Gastrocnemius medialis (tissue), 4 donors: ENCODE measurements at regions of chr12 and their contacts with region 1.

Region 1: GRCh38 chr12:93419388-93420034 is 22.2 kb downstream of the UBE2N start:
- DNase-seq: no peak
- ATAC-seq: peak; percentile 61 to 71
- H3K4me3 ChIP-seq: peak overlapping the region in 1 of 4 donors; percentile 13
- H3K27ac ChIP-seq: peak overlapping the region; percentile 58 to 71 (median 62)
- H3K4me1 ChIP-seq: peaks cover 59 to 66% of the 10 kb centered on the region in 2 donors
- H3K27me3 ChIP-seq: no peaks in the 10 kb centered on the region
- CTCF ChIP-seq: peak; percentile 64 to 75 (median 66)
- POLR2A ChIP-seq: no peak

Region 2: GRCh38 chr12:92784795-92785562 is 634.5 kb before region 1 on chr12:
- in situ Hi-C with region 1: loop called in 1 of 4 experiments (anchors 10 kb)
- intact Hi-C with region 1: loop called (anchors 5 kb)
- DNase-seq: peak in 1 of 2 donors; percentile 8
- ATAC-seq: peak; percentile 95 to 98
- H3K4me3 ChIP-seq: no peak overlapping the region
- H3K27ac ChIP-seq: peak overlapping the region; percentile 25 to 51 (median 32)
- H3K4me1 ChIP-seq: peaks cover 20 to 29% of the 10 kb centered on the region in 2 donors
- H3K27me3 ChIP-seq: no peaks in the 10 kb centered on the region
- CTCF ChIP-seq: peak; percentile 43 to 69 (median 67)
- POLR2A ChIP-seq: no peak

Region 3: DNA sequence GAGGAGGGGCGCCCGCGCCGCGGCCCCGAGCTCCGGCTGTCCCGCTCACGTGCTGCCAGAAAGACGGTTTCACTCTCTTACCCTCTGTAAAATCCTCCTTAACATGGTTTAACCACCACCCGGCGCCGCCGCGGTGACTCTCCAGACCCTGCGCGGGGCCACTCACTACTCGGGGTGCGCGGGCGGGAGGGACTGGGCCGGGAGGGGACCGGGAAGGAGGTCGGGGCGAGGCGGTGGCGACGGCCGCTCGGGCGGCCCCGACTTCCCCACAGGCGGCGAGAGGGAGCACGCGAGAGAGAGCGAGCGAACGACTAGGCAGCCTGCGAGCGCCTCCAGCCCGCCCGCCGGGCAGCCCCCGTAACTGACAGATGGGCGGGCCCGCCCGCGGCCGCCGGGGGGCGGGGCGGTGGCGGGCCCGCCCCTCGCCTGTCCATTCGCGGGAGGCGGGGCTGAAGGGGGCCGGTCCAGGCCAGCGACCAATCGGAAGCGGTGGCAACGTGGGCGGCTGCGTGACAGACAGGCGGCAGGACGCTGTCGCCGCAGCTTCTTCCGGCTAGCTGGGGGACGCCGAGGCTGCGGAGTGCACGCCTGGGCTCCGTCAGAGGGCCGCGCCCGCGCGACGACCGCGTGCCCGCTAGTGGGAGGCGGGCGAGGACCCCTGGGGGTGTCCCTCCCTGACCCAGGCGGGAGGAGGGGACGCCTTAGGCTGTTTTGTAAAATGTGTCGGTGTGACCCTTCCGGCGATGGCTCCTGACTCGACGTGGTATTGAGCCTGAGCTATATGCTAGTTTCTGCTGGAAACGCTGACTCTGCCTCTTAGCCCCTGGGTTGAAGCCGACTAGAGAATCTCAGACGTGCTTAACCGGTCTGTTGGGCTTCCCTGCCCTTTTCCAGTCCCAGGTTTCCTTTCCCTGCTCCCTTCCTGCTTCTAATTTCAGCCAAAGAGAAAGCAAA is 490.3 kb before region 1 on chr12 and contains the start of gene EEA1:
- in situ Hi-C with region 1: no loop called
- intact Hi-C with region 1: loop called (anchors 5 kb)
- DNase-seq: peak; percentile 96 to 97
- ATAC-seq: peak; percentile 83 to 84
- H3K4me3 ChIP-seq: peak within 1 kb of the TSS; percentile 69 to 92 (median 86)
- H3K27ac ChIP-seq: peak within 1 kb of the TSS; percentile 94 to 100 (median 99)
- H3K4me1 ChIP-seq: peaks cover 39 to 41% of the 10 kb centered on the region in 2 donors
- H3K27me3 ChIP-seq: no peaks in the 10 kb centered on the region
- CTCF ChIP-seq: peak in 4 of 5 experiments; percentile 11 to 45 (median 40)
- POLR2A ChIP-seq: peak; percentile 94 to 97
- total RNA-seq, gene EEA1: 18.6 to 28.7 (median 20.8) TPM

Region 4: DNA sequence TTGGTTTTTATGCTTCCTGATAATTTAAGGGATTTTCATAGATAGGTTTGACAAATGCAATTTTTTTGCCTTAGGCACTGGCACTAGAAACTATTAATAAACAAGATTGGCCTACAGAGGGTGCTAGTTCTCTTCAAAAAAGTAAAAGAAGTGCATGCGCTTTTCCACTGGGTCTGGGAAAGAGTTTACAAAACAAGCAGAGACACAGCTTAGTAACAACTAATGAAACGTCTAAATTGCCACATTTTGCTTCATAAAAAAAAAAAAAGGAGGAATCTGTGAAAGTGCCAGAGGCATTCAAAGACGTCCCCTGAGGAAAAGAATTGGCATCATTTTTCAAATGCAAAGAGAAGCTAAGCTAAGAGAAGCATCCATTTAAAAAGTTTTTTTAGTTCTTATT is 432.1 kb before region 1 on chr12:
- in situ Hi-C with region 1: loop called in 1 of 4 experiments (anchors 10 kb)
- intact Hi-C with region 1: loop called (anchors 1 kb)
- DNase-seq: peak in 1 of 2 donors; percentile 6
- ATAC-seq: peak; percentile 87 to 90
- H3K4me3 ChIP-seq: peak overlapping the region in 2 of 4 donors; percentile 4 to 14
- H3K27ac ChIP-seq: peak overlapping the region; percentile 59 to 78 (median 66)
- H3K4me1 ChIP-seq: peaks cover 8 to 11% of the 10 kb centered on the region in 2 donors
- H3K27me3 ChIP-seq: no peaks in the 10 kb centered on the region
- CTCF ChIP-seq: peak; percentile 49 to 60 (median 52)
- POLR2A ChIP-seq: no peak

Region 5: GRCh38 chr12:93025145-93025805 is 394.2 kb before region 1 on chr12:
- in situ Hi-C with region 1: no loop called
- intact Hi-C with region 1: loop called (anchors 1 kb)
- DNase-seq: no peak
- ATAC-seq: peak; percentile 72 to 76
- H3K4me3 ChIP-seq: no peak overlapping the region
- H3K27ac ChIP-seq: no peak overlapping the region
- H3K4me1 ChIP-seq: no peaks in the 10 kb centered on the region
- H3K27me3 ChIP-seq: no peaks in the 10 kb centered on the region
- CTCF ChIP-seq: peak; percentile 18 to 53 (median 46)
- POLR2A ChIP-seq: no peak

Region 6: DNA sequence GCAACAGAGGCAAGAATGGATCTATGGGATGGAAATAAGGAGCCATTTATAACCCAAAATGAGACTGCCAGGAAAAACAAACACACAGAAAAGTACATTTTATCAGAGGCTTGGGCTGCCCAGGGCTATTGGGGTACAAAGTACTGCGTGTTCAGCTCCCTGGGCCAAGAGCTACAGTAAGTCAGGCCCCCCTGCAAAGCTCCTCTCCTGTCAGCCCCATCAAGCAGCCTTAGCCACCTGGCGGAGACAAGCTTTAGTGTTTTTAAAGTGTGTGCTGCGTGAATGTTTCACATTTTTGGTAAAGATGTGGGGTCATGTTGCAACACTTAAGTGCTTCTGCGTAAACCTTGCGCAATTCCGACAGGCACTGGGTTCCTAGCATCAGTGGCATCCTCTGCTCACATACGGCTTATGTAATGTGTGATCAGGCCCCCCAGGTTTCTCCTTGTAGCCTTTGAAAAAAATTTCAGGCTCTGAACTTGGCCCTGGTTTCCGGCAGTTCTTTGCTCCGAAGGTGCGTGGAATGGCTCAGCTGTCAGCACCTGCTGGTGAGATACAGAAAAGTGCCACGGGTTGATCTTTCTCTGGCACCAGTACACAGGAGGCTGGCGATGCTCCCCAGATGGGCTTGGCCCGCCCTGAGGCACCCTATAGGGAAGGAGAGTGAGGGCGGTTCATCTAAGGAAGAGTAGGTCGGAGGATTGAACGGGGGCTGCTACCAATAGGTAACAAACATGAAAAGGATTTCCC is 291.8 kb before region 1 on chr12:
- in situ Hi-C with region 1: no loop called
- intact Hi-C with region 1: loop called (anchors 10 kb)
- DNase-seq: peak; percentile 36 to 44
- ATAC-seq: peak; percentile 49 to 63
- H3K4me3 ChIP-seq: peak overlapping the region; percentile 19 to 47 (median 22)
- H3K27ac ChIP-seq: peak overlapping the region; percentile 84 to 89 (median 87)
- H3K4me1 ChIP-seq: peaks cover 25 to 27% of the 10 kb centered on the region in 2 donors
- H3K27me3 ChIP-seq: no peaks in the 10 kb centered on the region
- CTCF ChIP-seq: peak; percentile 10 to 47 (median 37)
- POLR2A ChIP-seq: no peak